Endothelial cell of umbilical vein (primary cell): ENCODE measurements at regions of chr2 and their contacts with region 1.

Region 1: GRCh38 chr2:237572021-237572741 is 5.8 kb downstream of the PRLH start:
- DNase-seq: peak; percentile 82
- H3K4me3 ChIP-seq: no peak overlapping the region
- H3K27ac ChIP-seq: no peak overlapping the region
- H3K4me1 ChIP-seq: no peaks in the 10 kb centered on the region
- H3K27me3 ChIP-seq: no peaks in the 10 kb centered on the region
- CTCF ChIP-seq: peak; percentile 99
- POLR2A ChIP-seq: no peak

Region 2: DNA sequence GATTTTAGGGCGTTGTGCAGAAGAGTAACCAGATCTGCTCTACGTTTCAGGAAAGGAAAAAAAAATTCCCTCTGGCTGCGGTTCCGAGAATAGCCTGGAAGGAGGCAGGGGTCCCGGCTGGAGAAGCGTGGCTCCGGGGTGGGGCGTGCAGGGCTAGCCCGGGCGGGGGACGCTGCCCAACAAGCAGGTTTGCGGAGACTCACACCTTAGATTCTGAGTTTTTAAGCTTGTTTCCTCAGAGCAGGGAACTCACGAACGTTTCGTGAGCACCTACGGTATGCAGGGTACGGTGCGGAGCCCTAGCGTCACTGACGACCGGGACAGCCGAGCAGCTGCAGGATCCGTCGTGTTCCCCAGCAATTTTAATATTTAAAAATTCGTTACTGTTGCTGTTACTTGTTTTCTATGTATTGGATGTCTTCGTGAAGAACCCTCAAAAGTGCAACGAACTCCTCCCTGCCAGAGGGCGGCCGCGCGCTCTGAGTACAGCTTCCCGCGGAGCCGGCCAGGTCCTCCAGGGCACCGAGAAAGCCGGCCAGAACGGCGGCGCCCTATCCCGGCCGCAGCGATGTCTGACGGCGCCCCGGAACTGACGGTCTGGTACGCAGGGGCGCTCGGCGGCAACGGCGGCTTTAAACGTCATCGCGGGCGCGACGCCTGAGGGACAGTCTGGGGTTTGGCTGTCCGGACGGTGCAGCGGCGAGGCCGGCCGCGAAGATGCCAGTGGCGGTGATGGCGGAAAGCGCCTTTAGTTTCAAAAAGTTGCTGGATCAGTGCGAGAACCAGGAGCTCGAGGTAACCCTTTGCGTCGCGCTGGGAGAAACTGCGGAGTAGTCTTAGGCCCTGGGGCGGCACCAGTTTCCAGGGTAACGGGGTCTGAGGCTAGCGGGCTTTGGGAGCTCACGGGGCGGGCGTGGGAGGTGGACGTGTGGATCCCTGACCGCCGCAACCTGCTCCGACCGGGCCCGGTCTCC is 486.6 kb before region 1 on chr2 and contains the start of gene COPS8:
- CTCF ChIA-PET with region 1: interaction called, 56 read pairs
- POLR2A ChIA-PET with region 1: no interaction called
- dilution Hi-C with region 1: no loop called
- intact Hi-C with region 1: no loop called
- DNase-seq: peak; percentile 94
- H3K4me3 ChIP-seq: peak within 1 kb of the TSS; percentile 52 to 92 (median 75)
- H3K27ac ChIP-seq: peak within 1 kb of the TSS; percentile 94
- H3K4me1 ChIP-seq: peaks cover 22% of the 10 kb centered on the region
- H3K27me3 ChIP-seq: no peaks in the 10 kb centered on the region
- CTCF ChIP-seq: peak in 1 of 2 donors; percentile 9
- POLR2A ChIP-seq: peak; percentile 83
- total RNA-seq, gene COPS8: 71.4 and 80.7 TPM in 2 replicates

Region 3: DNA sequence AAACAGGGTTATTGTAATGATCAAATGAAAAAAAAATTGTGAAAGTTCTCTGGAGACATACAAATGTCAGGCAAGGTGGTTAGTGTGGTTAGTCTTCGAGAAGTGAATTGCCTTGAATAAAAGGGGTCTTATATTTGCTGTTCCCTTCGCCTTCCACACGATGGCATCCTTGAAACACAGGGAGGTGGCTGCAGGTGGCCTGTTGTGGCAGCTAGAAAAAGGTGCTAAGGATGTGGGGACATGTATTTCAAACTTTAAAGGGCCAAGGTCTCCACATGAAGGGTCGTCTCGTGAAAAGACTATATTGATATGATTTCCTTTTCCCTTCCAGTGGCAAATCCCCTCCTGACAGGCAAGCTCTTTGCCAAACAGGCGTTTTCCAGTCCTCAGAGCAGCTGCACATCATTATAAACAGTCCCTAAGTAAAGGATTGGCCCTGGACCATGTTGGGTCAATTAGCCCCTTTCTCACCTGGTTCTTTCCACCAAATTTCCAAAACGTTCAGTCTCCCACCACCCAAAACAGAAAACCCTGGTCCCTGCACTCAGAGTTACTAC is 418.0 kb before region 1 on chr2:
- CTCF ChIA-PET with region 1: interaction called, 53 read pairs
- POLR2A ChIA-PET with region 1: no interaction called
- dilution Hi-C with region 1: no loop called
- intact Hi-C with region 1: loop called (anchors 1 kb)
- DNase-seq: peak; percentile 59
- H3K4me3 ChIP-seq: no peak overlapping the region
- H3K27ac ChIP-seq: no peak overlapping the region
- H3K4me1 ChIP-seq: peaks cover 8% of the 10 kb centered on the region
- H3K27me3 ChIP-seq: no peaks in the 10 kb centered on the region
- CTCF ChIP-seq: peak; percentile 73 to 75
- POLR2A ChIP-seq: no peak

Region 4: DNA sequence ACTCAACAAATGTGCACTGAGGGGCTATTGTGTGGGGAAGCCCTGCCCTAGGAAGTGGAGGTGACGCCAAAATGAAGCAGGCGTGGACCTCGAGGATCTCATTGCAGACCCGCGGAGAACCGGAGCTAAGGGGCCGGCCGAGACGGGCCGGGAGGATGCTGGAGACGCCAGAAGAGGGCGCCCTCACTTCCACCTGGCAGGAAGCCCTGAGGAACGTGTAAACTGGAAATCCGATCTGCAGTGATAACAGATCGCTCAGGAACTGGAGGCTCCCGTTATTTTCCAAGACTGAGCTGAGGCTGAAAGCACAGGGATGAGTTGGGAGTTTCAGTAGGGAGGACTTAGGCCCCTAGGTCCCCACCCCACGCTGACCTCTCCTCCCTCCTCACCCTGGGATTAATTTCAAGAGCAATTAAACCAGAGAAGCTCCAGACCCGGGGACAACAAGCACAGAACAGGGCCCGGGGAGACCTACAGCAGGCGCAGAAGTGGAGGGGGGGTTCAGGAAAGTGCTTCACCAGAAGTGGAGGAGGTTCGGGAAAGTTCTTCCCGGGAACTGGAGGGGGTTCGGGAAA is 150.6 kb before region 1 on chr2:
- CTCF ChIA-PET with region 1: interaction called, 153 read pairs
- POLR2A ChIA-PET with region 1: no interaction called
- dilution Hi-C with region 1: no loop called
- intact Hi-C with region 1: loop called (anchors 1 kb)
- DNase-seq: peak; percentile 76
- H3K4me3 ChIP-seq: no peak overlapping the region
- H3K27ac ChIP-seq: no peak overlapping the region
- H3K4me1 ChIP-seq: peaks cover 5% of the 10 kb centered on the region
- H3K27me3 ChIP-seq: peaks cover 20 to 23% of the 10 kb centered on the region in 2 experiments
- CTCF ChIP-seq: peak; percentile 84 to 85
- POLR2A ChIP-seq: no peak

Region 5: GRCh38 chr2:237474931-237475703 is 97.1 kb before region 1 on chr2:
- CTCF ChIA-PET with region 1: interaction called, 101 read pairs
- POLR2A ChIA-PET with region 1: interaction called, 3 read pairs
- dilution Hi-C with region 1: no loop called
- intact Hi-C with region 1: loop called (anchors 1 kb)
- DNase-seq: peak; percentile 54
- H3K4me3 ChIP-seq: peak overlapping the region; percentile 38 to 51 (median 40)
- H3K27ac ChIP-seq: peak overlapping the region; percentile 23
- H3K4me1 ChIP-seq: peaks cover 12% of the 10 kb centered on the region
- H3K27me3 ChIP-seq: peaks cover 36 to 42% of the 10 kb centered on the region in 2 experiments
- CTCF ChIP-seq: peak; percentile 73 to 93
- POLR2A ChIP-seq: peak; percentile 23

Region 6: GRCh38 chr2:237533668-237534161 is 38.5 kb before region 1 on chr2:
- CTCF ChIA-PET with region 1: interaction called, 12 read pairs
- POLR2A ChIA-PET with region 1: no interaction called
- dilution Hi-C with region 1: no loop called
- intact Hi-C with region 1: no loop called
- DNase-seq: no peak
- H3K4me3 ChIP-seq: no peak overlapping the region
- H3K27ac ChIP-seq: no peak overlapping the region
- H3K4me1 ChIP-seq: peaks cover 2% of the 10 kb centered on the region
- H3K27me3 ChIP-seq: no peaks in the 10 kb centered on the region
- CTCF ChIP-seq: no peak
- POLR2A ChIP-seq: no peak